Mammary epithelial cell (primary cell): ENCODE measurements at regions of chr3 and their contacts with region 1.

Region 1: GRCh38 chr3:38521391-38521987 is 25.3 kb downstream of the EXOG start:
- DNase-seq: peak; percentile 54
- H3K4me3 ChIP-seq: no peak overlapping the region
- H3K27ac ChIP-seq: no peak overlapping the region
- H3K4me1 ChIP-seq: no peaks in the 10 kb centered on the region
- H3K27me3 ChIP-seq: no peaks in the 10 kb centered on the region
- CTCF ChIP-seq: peak; percentile 81 to 90

Region 2: GRCh38 chr3:37922721-37923568 is 598.5 kb before region 1 on chr3:
- CTCF ChIA-PET with region 1: no interaction called
- dilution Hi-C with region 1: no loop called
- in situ Hi-C with region 1: no loop called
- intact Hi-C with region 1: no loop called
- DNase-seq: no peak
- H3K4me3 ChIP-seq: no peak overlapping the region
- H3K27ac ChIP-seq: peak overlapping the region; percentile 30
- H3K4me1 ChIP-seq: peaks cover 13% of the 10 kb centered on the region
- H3K27me3 ChIP-seq: no peaks in the 10 kb centered on the region
- CTCF ChIP-seq: no peak

Region 3: GRCh38 chr3:38421679-38422336 is 99.7 kb before region 1 on chr3:
- CTCF ChIA-PET with region 1: no interaction called
- dilution Hi-C with region 1: no loop called
- in situ Hi-C with region 1: no loop called
- intact Hi-C with region 1: no loop called
- DNase-seq: no peak
- H3K4me3 ChIP-seq: no peak overlapping the region
- H3K27ac ChIP-seq: no peak overlapping the region
- H3K4me1 ChIP-seq: peaks cover under 1% of the 10 kb centered on the region
- H3K27me3 ChIP-seq: no peaks in the 10 kb centered on the region
- CTCF ChIP-seq: no peak

Region 4: DNA sequence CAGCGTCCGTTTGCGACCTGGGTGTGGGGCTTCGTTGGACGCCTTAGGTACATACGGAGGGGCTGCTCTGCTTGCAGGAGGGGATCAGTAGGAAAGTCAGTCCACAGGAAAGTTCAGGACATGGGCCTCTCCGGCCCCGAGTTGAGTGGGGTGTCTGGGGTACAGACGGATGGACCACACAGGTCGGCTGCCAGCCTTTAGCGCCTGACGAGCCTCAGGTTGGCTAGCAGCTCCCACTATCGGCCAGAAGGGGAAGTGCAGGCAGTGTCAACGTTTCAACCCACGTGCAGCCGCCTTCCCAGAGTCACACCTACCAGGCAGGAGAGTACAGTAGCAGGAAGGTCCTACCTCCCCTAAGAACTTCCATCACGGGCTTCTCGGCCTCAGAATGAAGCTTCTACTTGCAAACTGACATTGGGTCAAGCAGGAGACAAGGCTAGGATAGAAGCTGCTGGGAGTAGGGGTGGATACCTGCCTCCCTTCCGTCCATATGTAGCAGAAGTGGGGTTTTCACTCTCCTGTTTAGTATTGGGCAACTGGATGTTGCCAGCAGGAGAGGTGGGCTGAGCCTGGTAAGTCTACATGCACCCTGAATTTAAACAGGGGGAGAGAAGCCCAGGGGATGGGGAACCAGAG is 129.8 kb after region 1 on chr3:
- CTCF ChIA-PET with region 1: no interaction called
- dilution Hi-C with region 1: no loop called
- in situ Hi-C with region 1: loop called in 1 of 2 experiments (anchors 5 kb)
- intact Hi-C with region 1: loop called (anchors 1 kb)
- DNase-seq: peak; percentile 45
- H3K4me3 ChIP-seq: no peak overlapping the region
- H3K27ac ChIP-seq: no peak overlapping the region
- H3K4me1 ChIP-seq: peaks cover 6% of the 10 kb centered on the region
- H3K27me3 ChIP-seq: peaks cover 9% of the 10 kb centered on the region
- CTCF ChIP-seq: peak; percentile 98 to 99

Region 5: GRCh38 chr3:38662544-38662943 is 141.1 kb after region 1 on chr3:
- CTCF ChIA-PET with region 1: interaction called, 21 read pairs
- dilution Hi-C with region 1: no loop called
- in situ Hi-C with region 1: loop called (anchors 5 to 10 kb)
- intact Hi-C with region 1: loop called (anchors 1 kb)
- DNase-seq: peak; percentile 57
- H3K4me3 ChIP-seq: no peak overlapping the region
- H3K27ac ChIP-seq: no peak overlapping the region
- H3K4me1 ChIP-seq: peaks cover 11% of the 10 kb centered on the region
- H3K27me3 ChIP-seq: no peaks in the 10 kb centered on the region
- CTCF ChIP-seq: peak; percentile 72 to 84

Region 6: DNA sequence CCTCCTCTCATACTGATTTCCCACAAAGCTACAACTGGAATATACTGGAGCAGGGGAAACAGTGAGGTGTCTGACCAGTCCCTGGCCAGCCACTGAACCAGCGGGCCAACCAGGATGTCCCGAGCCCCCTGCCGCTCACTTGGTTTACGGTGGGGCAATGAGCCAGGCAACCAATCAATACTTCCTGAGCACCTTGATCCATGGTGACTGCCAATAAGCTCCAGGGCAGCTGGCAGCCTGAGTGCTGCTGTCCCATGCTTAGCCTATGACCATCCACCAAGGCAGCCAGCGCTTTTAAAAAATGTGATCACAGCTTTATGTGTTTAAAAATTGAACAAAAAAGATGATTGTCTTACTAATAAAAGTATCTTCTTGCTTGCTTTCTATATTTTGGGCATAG is 290.3 kb after region 1 on chr3:
- CTCF ChIA-PET with region 1: no interaction called
- dilution Hi-C with region 1: no loop called
- in situ Hi-C with region 1: no loop called
- intact Hi-C with region 1: no loop called
- DNase-seq: no peak
- H3K4me3 ChIP-seq: no peak overlapping the region
- H3K27ac ChIP-seq: no peak overlapping the region
- H3K4me1 ChIP-seq: no peaks in the 10 kb centered on the region
- H3K27me3 ChIP-seq: no peaks in the 10 kb centered on the region
- CTCF ChIP-seq: no peak

Region 7: DNA sequence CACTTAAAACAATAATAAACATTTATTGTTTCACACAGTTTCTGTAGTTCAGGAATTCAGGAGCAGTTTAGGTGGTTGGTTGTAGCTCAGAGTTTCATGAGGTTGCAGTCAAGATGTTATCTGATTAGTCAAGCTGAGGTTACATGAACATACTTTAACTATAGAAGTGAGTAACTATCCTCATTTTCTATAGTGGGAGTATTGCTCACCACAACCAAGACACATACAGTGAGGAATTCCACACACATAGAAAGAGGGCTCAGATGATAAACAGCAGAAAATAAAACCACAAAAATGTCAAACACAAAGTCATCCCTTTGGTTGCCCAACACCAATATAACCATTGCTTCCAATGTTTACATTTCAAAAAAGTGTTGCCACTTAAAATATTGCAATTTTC is 516.7 kb after region 1 on chr3:
- CTCF ChIA-PET with region 1: no interaction called
- dilution Hi-C with region 1: no loop called
- in situ Hi-C with region 1: no loop called
- intact Hi-C with region 1: loop called (anchors 10 kb)
- DNase-seq: peak; percentile 93
- H3K4me3 ChIP-seq: no peak overlapping the region
- H3K27ac ChIP-seq: peak overlapping the region; percentile 40
- H3K4me1 ChIP-seq: peaks cover 13% of the 10 kb centered on the region
- H3K27me3 ChIP-seq: no peaks in the 10 kb centered on the region
- CTCF ChIP-seq: no peak